Gastrocnemius medialis (tissue), 4 donors: ENCODE measurements at regions of chr1 and their contacts with region 1.

Region 1: GRCh38 chr1:16091296-16091695 is 17.8 kb upstream of the FAM131C start:
- DNase-seq: no peak
- ATAC-seq: no peak
- H3K4me3 ChIP-seq: no peak overlapping the region
- H3K27ac ChIP-seq: no peak overlapping the region
- H3K4me1 ChIP-seq: no peaks in the 10 kb centered on the region
- H3K27me3 ChIP-seq: no peaks in the 10 kb centered on the region
- CTCF ChIP-seq: no peak
- POLR2A ChIP-seq: no peak

Region 2: DNA sequence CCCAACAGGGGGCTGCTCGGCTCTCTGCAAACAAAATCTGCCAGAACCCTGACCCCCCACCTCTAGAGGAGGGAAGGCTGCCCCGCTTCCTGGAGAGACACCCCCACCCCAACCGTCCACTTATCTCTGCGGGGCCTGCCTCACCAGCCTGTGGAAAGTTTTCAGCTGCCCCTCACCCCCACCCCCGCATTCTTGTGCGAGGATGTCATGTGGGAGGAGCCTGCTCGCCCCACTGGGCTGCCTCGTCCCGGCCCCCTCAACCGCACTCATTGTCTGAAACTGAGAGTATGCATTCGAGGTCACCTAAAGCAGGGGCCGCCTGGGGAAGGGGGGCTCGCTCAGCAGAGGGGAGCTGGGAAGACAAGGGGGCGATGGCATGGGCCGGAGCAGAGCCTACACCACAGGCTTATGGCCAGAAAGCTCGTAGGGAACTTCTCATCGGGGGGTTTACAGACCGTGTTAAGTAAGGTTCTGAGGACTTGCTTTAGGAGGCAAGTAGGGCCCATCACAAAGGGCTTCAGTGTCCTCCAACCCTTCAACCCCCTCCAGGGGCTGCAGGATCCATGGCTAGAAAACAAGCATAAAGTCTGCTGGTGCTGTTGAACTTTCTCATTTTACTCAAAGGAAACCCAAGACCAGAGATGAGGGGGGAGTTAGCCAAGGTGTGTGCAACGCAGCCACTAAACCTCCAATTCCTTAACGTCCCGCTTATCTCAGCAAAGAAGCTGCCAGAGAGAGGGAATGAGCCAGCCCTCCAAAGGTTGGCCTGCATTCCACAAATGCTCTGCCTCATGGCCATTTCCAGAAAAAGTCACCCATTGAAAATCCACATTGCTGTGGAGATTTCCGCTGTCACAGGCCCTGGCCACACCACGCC is 55.2 kb after region 1 on chr1:
- in situ Hi-C with region 1: no loop called
- intact Hi-C with region 1: loop called (anchors 5 kb)
- DNase-seq: peak in 1 of 2 donors; percentile 26
- ATAC-seq: peak in 1 of 2 donors; percentile 31
- H3K4me3 ChIP-seq: peak overlapping the region; percentile 26 to 45 (median 38)
- H3K27ac ChIP-seq: peak overlapping the region; percentile 28 to 80 (median 76)
- H3K4me1 ChIP-seq: peaks cover 40 to 42% of the 10 kb centered on the region in 2 donors
- H3K27me3 ChIP-seq: peaks cover 17 to 24% (median 20%) of the 10 kb centered on the region in 3 donors
- CTCF ChIP-seq: no peak
- POLR2A ChIP-seq: peak in 1 of 2 donors; percentile 34